ENCODE measurements at regions of chr3 and their contacts with region 1.

Region 1: GRCh38 chr3:172808969-172809546 is 58.5 kb downstream of the ECT2 start:
- DNase-seq: no peak
- ATAC-seq: no peak
- H3K4me3 Mint-ChIP-seq: no peak overlapping the region
- H3K27ac Mint-ChIP-seq: no peak overlapping the region
- H3K4me1 Mint-ChIP-seq: no peaks in the 10 kb centered on the region
- H3K27me3 Mint-ChIP-seq: no peaks in the 10 kb centered on the region
- CTCF ChIP-seq: no peak

Region 2: GRCh38 chr3:173553635-173554280 is 744.7 kb after region 1 on chr3:
- CTCF ChIA-PET with region 1: no interaction called
- POLR2A ChIA-PET with region 1: no interaction called
- intact Hi-C with region 1: loop called (anchors 5 kb)
- DNase-seq: no peak
- ATAC-seq: no peak
- H3K4me3 Mint-ChIP-seq: no peak overlapping the region
- H3K27ac Mint-ChIP-seq: no peak overlapping the region
- H3K4me1 Mint-ChIP-seq: no peaks in the 10 kb centered on the region
- H3K27me3 Mint-ChIP-seq: no peaks in the 10 kb centered on the region
- CTCF ChIP-seq: no peak

Measured in activated B cell treated with CpG ODN at 0.5 μM for 24 hours (primary cell).